HCT116 (cell line): ENCODE measurements at regions of chr17 and their contacts with region 1.

Region 1: DNA sequence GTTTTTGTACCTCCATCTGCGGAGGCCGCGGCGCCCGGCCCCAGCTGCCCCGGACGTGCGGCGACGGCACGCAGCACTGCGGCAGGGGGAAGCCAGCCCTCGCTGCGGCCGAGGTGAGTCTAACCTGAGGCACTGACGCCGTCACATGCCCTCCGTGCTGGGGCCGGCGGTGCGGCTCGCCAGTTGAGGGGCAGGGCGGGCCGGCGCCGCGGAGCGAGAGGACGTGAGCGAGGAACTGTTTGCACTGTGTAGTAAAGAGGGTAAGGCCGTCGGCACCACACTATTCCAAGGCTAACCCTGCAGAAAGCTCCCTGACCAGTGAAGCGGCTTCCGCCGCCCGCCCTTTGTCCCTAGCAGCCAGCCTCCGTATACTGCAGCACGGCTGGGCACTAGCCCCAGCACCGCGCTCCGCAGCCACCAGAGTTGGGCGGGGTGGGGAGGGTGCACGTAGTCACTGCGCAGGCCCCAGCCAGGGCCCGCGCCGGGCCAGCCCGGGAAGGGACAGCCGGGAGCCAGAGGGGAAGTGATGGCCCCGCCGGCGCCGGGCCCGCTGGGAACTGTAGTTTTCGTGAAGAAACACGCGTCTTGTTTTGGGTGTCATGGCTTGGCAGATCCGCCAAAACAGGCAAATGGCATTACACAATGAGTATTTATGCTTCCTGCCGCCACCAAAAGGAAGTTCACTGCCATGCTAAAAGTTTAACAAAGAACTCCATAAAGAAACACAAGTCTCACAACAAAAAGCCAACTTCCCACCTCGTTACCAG is 580 bp upstream of the KANSL1 start:
- DNase-seq: peak; percentile 89
- ATAC-seq: peak; percentile 93
- H3K4me3 ChIP-seq: peak overlapping the region; percentile 65 to 84
- H3K27ac ChIP-seq: peak overlapping the region; percentile 98
- H3K4me1 ChIP-seq: peaks cover 15 to 37% of the 10 kb centered on the region in 2 experiments
- H3K27me3 ChIP-seq: no peaks in the 10 kb centered on the region
- CTCF ChIP-seq: peak in 2 of 3 experiments; percentile 17 to 40; a peak in 2 of 6 replicates
- POLR2A ChIP-seq: peak; percentile 86
- RAD21 ChIP-seq: no peak

Region 2: GRCh38 chr17:45325810-45326209 is 868.0 kb before region 1 on chr17:
- CTCF ChIA-PET with region 1: no interaction called
- POLR2A ChIA-PET with region 1: no interaction called
- RAD21 ChIA-PET with region 1: no interaction called
- intact Hi-C with region 1: no loop called
- DNase-seq: no peak
- ATAC-seq: no peak
- H3K4me3 ChIP-seq: no peak overlapping the region
- H3K27ac ChIP-seq: no peak overlapping the region
- H3K4me1 ChIP-seq: peaks cover 19 to 25% of the 10 kb centered on the region in 2 experiments
- H3K27me3 ChIP-seq: no peaks in the 10 kb centered on the region
- CTCF ChIP-seq: no peak
- POLR2A ChIP-seq: no peak
- RAD21 ChIP-seq: no peak

Region 3: DNA sequence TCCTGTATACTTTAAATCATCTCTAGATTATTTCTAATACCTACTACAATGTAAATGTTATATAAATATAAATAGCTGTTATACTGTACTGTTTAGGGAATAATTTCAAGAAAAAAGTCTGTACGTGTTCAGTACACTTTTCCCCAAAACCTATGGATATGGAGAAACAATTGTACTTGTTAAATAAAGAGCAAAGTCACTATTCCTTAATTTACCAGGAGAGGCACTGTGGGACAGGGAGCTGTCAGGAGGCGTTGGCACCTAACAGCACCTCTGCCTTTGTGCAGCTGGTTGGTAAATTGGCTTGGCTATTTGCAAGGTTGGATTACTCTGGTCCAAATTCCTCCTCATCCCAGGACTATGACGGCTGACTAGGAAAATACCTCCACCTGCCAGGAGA is 381.7 kb before region 1 on chr17:
- CTCF ChIA-PET with region 1: no interaction called
- POLR2A ChIA-PET with region 1: no interaction called
- RAD21 ChIA-PET with region 1: no interaction called
- intact Hi-C with region 1: no loop called
- DNase-seq: peak; percentile 37
- ATAC-seq: peak; percentile 65
- H3K4me3 ChIP-seq: no peak overlapping the region
- H3K27ac ChIP-seq: no peak overlapping the region
- H3K4me1 ChIP-seq: no peaks in the 10 kb centered on the region
- H3K27me3 ChIP-seq: no peaks in the 10 kb centered on the region
- CTCF ChIP-seq: peak; percentile 28 to 51 (median 40); a peak in 4 of 6 replicates
- POLR2A ChIP-seq: no peak
- RAD21 ChIP-seq: no peak; the same call in 1 of the 2 replicates

Region 4: DNA sequence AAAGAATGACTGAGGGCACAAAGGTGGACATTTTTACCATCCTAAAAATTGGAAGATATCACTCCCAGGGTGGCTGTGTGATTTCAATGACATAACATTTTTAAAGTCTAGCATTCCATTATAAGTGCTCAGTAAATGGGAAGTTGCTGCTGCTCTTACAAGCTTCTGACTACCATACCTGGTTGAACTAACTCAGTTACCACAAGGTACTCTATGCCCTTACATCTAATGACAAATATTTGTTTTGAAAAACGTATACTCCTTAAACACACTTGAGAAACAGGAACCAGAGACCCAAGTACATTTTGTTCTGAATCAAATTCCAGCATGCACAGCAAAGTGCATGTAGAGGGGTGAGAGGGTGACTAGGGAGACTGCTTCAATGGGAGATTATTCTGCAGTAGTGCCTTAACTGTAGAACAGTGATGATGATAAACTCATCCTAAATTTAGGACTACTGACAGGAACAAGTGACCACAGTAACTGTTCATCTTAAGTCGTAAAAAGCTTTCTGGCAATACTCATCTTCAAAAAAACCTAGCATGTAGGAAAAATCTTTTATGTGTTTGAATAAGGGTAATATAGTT is 84.1 kb before region 1 on chr17:
- CTCF ChIA-PET with region 1: no interaction called
- POLR2A ChIA-PET with region 1: no interaction called
- RAD21 ChIA-PET with region 1: no interaction called
- intact Hi-C with region 1: no loop called
- DNase-seq: no peak
- ATAC-seq: no peak
- H3K4me3 ChIP-seq: no peak overlapping the region
- H3K27ac ChIP-seq: no peak overlapping the region
- H3K4me1 ChIP-seq: no peaks in the 10 kb centered on the region
- H3K27me3 ChIP-seq: no peaks in the 10 kb centered on the region
- CTCF ChIP-seq: no peak
- POLR2A ChIP-seq: no peak
- RAD21 ChIP-seq: no peak

Region 5: DNA sequence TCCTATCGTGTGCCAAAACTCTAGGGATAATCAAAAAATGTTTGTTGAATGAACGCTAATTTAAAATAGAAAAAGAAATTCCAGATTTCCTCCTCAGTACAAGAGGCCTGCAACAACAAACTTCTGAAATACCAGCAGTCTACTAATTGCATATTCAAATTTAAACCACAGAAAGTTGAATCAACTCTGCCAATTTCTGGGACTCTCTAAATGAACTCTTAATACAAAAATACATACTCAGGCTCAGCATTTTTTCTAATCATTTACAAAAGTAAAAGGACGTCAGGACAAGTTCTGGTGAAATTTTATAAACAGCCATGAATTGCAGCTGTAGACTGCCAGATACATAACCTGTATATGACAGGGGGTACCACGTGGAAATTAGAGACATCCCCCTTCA is 49.6 kb before region 1 on chr17:
- CTCF ChIA-PET with region 1: interaction called, 10 read pairs
- POLR2A ChIA-PET with region 1: no interaction called
- RAD21 ChIA-PET with region 1: interaction called in 1 of 2 experiments, 3 read pairs
- intact Hi-C with region 1: no loop called
- DNase-seq: no peak
- ATAC-seq: no peak
- H3K4me3 ChIP-seq: no peak overlapping the region
- H3K27ac ChIP-seq: no peak overlapping the region
- H3K4me1 ChIP-seq: no peaks in the 10 kb centered on the region
- H3K27me3 ChIP-seq: no peaks in the 10 kb centered on the region
- CTCF ChIP-seq: no peak
- POLR2A ChIP-seq: no peak
- RAD21 ChIP-seq: no peak

Region 6: GRCh38 chr17:46179375-46179999 is 14.3 kb before region 1 on chr17:
- CTCF ChIA-PET with region 1: interaction called, 19 read pairs
- POLR2A ChIA-PET with region 1: interaction called, 3 read pairs
- RAD21 ChIA-PET with region 1: no interaction called
- intact Hi-C with region 1: no loop called
- DNase-seq: no peak
- ATAC-seq: no peak
- H3K4me3 ChIP-seq: no peak overlapping the region
- H3K27ac ChIP-seq: no peak overlapping the region
- H3K4me1 ChIP-seq: peaks cover 0 to 18% of the 10 kb centered on the region in 2 experiments; a peak in 2 of 4 replicates
- H3K27me3 ChIP-seq: no peaks in the 10 kb centered on the region
- CTCF ChIP-seq: no peak
- POLR2A ChIP-seq: no peak
- RAD21 ChIP-seq: no peak

Region 7: GRCh38 chr17:46212634-46213435 is 19.0 kb after region 1 on chr17:
- CTCF ChIA-PET with region 1: interaction called, 15 read pairs
- POLR2A ChIA-PET with region 1: interaction called, 3 read pairs
- RAD21 ChIA-PET with region 1: interaction called in 1 of 2 experiments, 3 read pairs
- intact Hi-C with region 1: no loop called
- DNase-seq: peak; percentile 48
- ATAC-seq: peak; percentile 89
- H3K4me3 ChIP-seq: no peak overlapping the region
- H3K27ac ChIP-seq: no peak overlapping the region
- H3K4me1 ChIP-seq: no peaks in the 10 kb centered on the region
- H3K27me3 ChIP-seq: no peaks in the 10 kb centered on the region
- CTCF ChIP-seq: peak; percentile 76 to 91 (median 83); a peak in 5 of 6 replicates
- POLR2A ChIP-seq: no peak
- RAD21 ChIP-seq: peak; percentile 74